Colonic mucosa (tissue), 4 donors: ENCODE measurements at regions of chr15 and their contacts with region 1.

Region 1: DNA sequence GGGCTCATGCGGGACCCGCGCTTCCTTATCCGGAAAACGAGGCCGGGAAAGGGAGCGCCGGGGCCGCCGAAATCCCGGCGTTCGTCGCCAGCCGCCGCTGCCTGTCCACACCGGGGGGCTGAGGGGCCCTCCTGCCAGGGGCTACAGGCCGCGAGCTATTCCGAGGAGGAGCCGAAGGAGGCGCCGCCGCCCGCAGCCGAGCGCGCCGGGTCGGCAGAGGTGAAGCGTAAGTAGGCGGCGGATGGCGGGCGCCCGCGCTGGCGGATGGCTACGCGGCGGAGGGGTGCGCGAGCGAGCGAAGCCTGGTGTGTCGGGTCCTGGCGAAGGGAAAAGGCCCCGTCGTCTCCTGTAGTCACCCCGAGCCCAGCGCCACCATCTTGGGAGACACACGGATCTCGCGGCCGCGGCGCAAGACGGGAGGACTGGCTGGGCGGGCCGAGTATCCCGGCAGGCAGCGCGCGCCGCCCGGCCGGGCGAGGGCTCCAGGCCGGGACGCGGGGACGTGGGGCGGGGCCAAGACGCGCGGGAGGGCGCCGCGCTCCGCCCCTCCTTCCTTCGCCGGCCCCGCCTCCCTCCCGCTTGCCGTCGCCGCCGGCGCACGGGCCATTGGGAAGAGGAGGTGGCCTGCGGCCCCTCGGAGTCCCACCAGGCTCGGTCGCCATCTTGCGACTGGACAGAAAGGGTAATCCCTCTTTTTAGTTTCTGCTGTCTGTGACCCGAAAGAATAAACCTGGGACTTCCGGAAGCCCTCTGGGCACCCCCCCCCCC is at the start of gene UBE3A:
- DNase-seq: peak; percentile 87
- H3K4me3 ChIP-seq: peak within 1 kb of the TSS; percentile 77
- H3K27ac ChIP-seq: peak within 1 kb of the TSS; percentile 91
- H3K4me1 ChIP-seq: peaks cover 8% of the 10 kb centered on the region
- H3K27me3 ChIP-seq: no peaks in the 10 kb centered on the region
- CTCF ChIP-seq: peak; percentile 0
- total RNA-seq, gene UBE3A: 83.9 to 92.2 TPM

Region 2: GRCh38 chr15:24956111-24956838 is 482.5 kb before region 1 on chr15:
- intact Hi-C with region 1: loop called (anchors 10 kb)
- DNase-seq: peak; percentile 71
- H3K4me3 ChIP-seq: peak overlapping the region; percentile 50
- H3K27ac ChIP-seq: peak overlapping the region; percentile 71
- H3K4me1 ChIP-seq: no peaks in the 10 kb centered on the region
- H3K27me3 ChIP-seq: no peaks in the 10 kb centered on the region
- CTCF ChIP-seq: no peak

Region 3: GRCh38 chr15:25372298-25372697 is 66.5 kb before region 1 on chr15:
- intact Hi-C with region 1: loop called (anchors 10 kb)
- DNase-seq: no peak
- H3K4me3 ChIP-seq: no peak overlapping the region
- H3K27ac ChIP-seq: no peak overlapping the region
- H3K4me1 ChIP-seq: no peaks in the 10 kb centered on the region
- H3K27me3 ChIP-seq: no peaks in the 10 kb centered on the region
- CTCF ChIP-seq: no peak

Region 4: GRCh38 chr15:25596644-25597562 is 158.1 kb after region 1 on chr15:
- intact Hi-C with region 1: no loop called
- DNase-seq: no peak
- H3K4me3 ChIP-seq: no peak overlapping the region
- H3K27ac ChIP-seq: no peak overlapping the region
- H3K4me1 ChIP-seq: no peaks in the 10 kb centered on the region
- H3K27me3 ChIP-seq: no peaks in the 10 kb centered on the region
- CTCF ChIP-seq: no peak

Region 5: GRCh38 chr15:25616471-25616870 is 177.7 kb after region 1 on chr15:
- intact Hi-C with region 1: no loop called
- DNase-seq: no peak
- H3K4me3 ChIP-seq: no peak overlapping the region
- H3K27ac ChIP-seq: no peak overlapping the region
- H3K4me1 ChIP-seq: no peaks in the 10 kb centered on the region
- H3K27me3 ChIP-seq: no peaks in the 10 kb centered on the region
- CTCF ChIP-seq: no peak